T-cell (primary cell): ENCODE measurements at regions of chr12 and their contacts with region 1.

Region 1: DNA sequence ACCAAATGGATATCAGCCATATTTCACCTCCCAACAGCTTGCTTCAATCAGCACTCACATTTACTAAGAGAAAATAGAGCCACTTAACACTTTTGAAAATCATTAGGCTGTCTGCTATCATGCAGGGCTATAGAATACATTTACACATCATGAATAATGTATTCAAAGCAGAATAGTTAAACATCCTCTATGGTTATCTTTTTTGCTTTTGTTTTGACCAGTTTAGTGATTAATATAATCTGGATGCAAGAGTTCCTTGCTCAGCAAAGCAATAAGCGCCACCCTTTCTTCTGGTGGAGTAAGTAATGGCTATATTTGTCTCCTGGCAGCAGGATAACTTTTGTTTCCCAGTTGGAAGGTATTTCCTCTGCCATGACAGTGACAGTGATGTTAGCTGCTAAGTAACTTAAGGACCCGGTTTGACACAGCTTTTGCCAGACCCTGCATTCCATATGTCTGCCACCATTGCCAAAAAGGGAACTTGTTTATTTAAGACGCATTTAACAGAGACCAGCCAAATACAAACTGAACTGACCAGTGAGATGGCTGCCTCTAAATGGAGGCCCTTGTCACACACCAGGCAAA is 70.3 kb upstream of the NR2C1 start:
- DNase-seq: no peak
- ATAC-seq: no peak
- H3K4me3 ChIP-seq: no peak overlapping the region
- H3K4me3 Mint-ChIP-seq: no peak overlapping the region
- H3K27ac ChIP-seq: no peak overlapping the region
- H3K27ac Mint-ChIP-seq: no peak overlapping the region
- H3K4me1 ChIP-seq: no peaks in the 10 kb centered on the region
- H3K4me1 Mint-ChIP-seq: no peaks in the 10 kb centered on the region
- H3K27me3 ChIP-seq: no peaks in the 10 kb centered on the region
- H3K27me3 Mint-ChIP-seq: no peaks in the 10 kb centered on the region

Region 2: DNA sequence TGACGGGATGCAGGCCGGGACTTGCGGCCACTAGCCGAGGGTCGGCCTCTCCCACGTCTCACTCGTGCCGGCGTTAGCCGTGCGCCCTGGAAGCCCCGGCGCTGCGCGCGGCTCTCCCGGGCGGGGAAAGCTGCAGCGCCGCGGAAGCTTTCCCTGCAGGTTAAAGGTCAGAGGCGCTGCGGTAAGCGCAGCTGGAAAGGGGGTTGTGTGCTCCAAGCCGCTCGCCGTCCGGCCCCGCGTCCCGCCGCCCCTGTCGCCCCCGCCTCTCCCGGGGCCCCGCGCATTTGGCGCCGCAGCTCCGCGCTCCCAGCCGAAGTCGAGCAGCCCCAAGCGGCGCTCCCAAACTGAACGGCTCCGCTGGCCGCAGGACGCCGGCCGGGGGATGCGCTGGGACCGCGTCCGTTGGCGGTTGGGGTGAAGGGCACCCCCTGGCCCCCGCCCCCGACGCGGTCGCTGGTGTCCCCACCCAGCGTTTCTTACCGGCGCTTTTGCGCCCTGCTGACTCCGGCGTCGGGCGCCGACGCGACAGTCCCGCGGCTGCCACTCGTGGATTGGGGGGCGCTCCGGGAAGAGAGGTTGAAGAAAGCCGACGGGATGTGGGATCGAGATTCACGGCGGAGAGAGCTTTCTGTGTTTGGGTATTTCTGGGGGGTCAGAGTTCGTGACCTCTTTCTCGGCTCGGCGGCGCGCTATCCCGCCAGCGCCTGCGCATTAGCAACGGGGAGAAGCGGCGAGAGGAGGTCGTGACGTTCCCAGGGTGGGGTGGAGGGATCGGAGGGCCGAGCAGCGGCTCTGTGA is 70.6 kb before region 1 on chr12 and contains the start of gene NR2C1:
- CTCF ChIA-PET with region 1: no interaction called
- POLR2A ChIA-PET with region 1: no interaction called
- DNase-seq: peak; percentile 82 to 96 (median 89)
- ATAC-seq: peak; percentile 96 to 98 (median 98)
- H3K4me3 ChIP-seq: peak within 1 kb of the TSS; percentile 75 to 93
- H3K4me3 Mint-ChIP-seq: peak within 1 kb of the TSS; percentile 90 to 97 (median 95)
- H3K27ac ChIP-seq: peak within 1 kb of the TSS; percentile 43
- H3K27ac Mint-ChIP-seq: peak within 1 kb of the TSS; percentile 85 to 94
- H3K4me1 ChIP-seq: peaks cover 3 to 8% of the 10 kb centered on the region in 2 experiments
- H3K4me1 Mint-ChIP-seq: peaks cover 21 to 29% (median 28%) of the 10 kb centered on the region in 3 donors
- H3K27me3 ChIP-seq: no peaks in the 10 kb centered on the region
- H3K27me3 Mint-ChIP-seq: no peaks in the 10 kb centered on the region
- total RNA-seq, gene NR2C1: 35.3 to 47.2 (median 39.6) TPM

Region 3: DNA sequence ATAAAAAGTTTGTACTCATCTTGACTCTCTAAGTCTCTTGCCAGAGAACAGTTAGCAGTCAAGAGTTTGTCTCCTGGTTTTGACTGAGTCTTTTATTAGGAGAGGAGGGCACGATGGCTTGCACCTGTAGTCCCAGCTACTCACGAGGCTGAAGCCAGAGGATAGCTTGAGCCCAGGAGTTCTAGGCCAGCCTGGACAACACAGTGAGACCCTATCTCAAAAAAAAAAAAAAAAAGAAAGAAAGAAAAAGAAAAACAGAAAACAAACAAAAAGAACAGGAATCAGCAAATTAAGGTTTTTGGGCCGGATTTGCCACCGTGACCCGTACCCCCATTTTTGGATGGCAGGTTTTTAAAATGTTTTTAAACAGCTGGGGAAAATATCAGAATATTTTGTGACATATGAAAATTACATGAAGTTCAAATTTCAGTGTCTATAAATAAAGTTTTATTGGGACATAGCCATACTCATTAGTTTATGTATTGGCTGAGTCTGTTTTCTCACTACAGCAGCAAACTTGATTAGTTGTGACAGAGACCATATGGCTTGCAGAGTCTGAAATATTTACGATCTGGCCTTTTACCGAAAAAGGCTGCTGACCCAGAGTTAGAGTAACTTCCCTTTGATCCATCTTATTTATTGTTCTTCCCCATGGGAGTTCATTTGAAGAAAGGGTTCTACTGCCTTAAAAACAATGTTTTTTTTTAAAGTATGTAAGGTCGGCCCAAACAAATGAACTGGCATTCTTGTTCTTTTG is 105.1 kb after region 1 on chr12:
- CTCF ChIA-PET with region 1: interaction called in 1 of 2 experiments, 11 read pairs
- POLR2A ChIA-PET with region 1: no interaction called
- DNase-seq: no peak
- ATAC-seq: no peak
- H3K4me3 ChIP-seq: no peak overlapping the region
- H3K4me3 Mint-ChIP-seq: no peak overlapping the region
- H3K27ac ChIP-seq: no peak overlapping the region
- H3K27ac Mint-ChIP-seq: no peak overlapping the region
- H3K4me1 ChIP-seq: no peaks in the 10 kb centered on the region
- H3K4me1 Mint-ChIP-seq: peaks cover 29 to 31% (median 30%) of the 10 kb centered on the region in 3 donors
- H3K27me3 ChIP-seq: no peaks in the 10 kb centered on the region
- H3K27me3 Mint-ChIP-seq: no peaks in the 10 kb centered on the region